Right lobe of liver (tissue), 6 donors: ENCODE measurements at regions of chr14 and their contacts with region 1.

Region 1: DNA sequence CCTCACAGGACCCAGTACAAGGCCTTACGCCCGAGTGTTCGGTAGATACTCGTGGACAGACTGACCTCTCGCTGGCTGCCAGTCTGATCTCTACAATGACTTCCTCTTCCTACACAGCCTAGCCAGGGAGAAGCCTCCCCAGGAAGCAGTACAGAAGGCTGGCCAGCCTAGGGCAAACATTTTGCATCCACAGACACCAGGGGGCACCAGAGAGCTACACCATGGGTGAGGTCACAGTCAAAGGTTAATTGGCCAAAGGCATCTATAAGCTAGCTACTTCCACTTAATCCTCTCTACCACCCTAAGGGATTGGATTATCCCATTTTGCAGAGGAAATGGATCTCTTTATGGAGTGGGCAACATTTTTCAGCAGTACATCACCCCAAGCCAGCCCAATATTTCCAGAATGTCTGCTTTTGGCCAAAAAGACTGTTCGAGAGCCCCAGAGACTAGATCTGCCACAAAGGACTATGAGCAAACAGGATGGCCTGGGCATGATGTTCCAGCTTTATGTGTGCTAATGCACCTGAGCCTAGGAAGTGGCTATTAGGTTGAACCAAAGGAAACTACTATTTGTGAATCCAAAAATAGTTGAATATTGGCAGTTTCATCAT is 14.6 kb upstream of the PNMA1 start:
- DNase-seq: peak; percentile 88 to 90 (median 88)
- ATAC-seq: peak; percentile 77 to 86 (median 80)
- H3K4me3 ChIP-seq: no peak overlapping the region
- H3K27ac ChIP-seq: peak overlapping the region in 1 of 3 donors; percentile 12
- H3K4me1 ChIP-seq: peaks cover 0 to 32% (median 19%) of the 10 kb centered on the region in 4 donors
- H3K27me3 ChIP-seq: no peaks in the 10 kb centered on the region
- CTCF ChIP-seq: peak; percentile 95 to 97 (median 96)
- POLR2A ChIP-seq: no peak

Region 2: GRCh38 chr14:73825551-73826188 is 96.8 kb after region 1 on chr14:
- intact Hi-C with region 1: loop called (anchors 5 kb)
- DNase-seq: peak; percentile 93 to 95 (median 94)
- ATAC-seq: peak; percentile 99 to 100 (median 99)
- H3K4me3 ChIP-seq: no peak overlapping the region
- H3K27ac ChIP-seq: no peak overlapping the region
- H3K4me1 ChIP-seq: peaks cover 0 to 7% (median 3%) of the 10 kb centered on the region in 4 donors
- H3K27me3 ChIP-seq: no peaks in the 10 kb centered on the region
- CTCF ChIP-seq: peak; percentile 87 to 97 (median 96)
- POLR2A ChIP-seq: no peak